ENCODE measurements at regions of chr9 and their contacts with region 1.

Region 1: DNA sequence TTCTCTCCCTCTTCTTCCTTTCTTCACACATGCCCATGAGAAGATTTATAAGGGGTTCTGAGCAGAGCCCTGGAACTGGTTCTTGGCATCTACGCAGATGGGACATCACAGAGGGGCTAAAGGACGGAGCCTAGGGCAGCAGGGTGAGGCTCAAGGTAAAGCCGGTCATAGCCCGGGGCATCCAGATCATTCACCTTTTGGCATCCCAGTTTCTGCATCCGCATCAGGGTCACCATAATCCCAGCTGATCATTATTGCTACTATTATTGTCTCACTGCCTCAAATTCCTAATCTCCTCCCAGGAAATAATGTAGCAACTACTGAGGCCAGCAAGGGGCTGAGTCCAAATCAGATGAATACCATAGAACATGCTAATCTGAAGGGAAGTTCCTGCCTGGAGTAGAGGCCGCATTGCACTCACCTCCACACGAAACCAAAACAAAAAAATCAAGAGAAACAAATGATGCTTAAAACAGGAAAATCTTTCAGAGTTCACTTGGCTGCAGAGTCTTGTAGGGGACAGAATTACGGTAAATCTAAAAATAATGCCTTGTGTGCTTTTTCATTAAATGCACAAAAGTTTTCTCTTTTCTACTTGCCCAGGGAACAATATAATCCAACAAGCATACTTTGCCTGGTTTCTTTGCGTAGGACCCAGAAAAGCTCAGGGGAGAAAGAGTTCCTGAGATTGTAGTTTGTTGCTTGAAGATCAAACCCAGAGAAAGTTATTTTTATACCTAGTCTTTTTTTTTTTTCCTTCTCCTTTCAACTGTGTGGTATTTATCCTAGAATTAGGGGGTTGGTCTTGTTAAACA is 87.6 kb upstream of the KLF4 start:
- DNase-seq: no peak
- ATAC-seq: peak; percentile 16 to 38

Region 2: GRCh38 chr9:107513464-107514100 is 63.6 kb before region 1 on chr9:
- intact Hi-C with region 1: loop called in 1 of 2 experiments (anchors 10 kb)
- DNase-seq: no peak
- ATAC-seq: peak in 1 of 2 donors; percentile 43

Region 3: GRCh38 chr9:107650321-107650720 is 73.2 kb after region 1 on chr9:
- intact Hi-C with region 1: no loop called
- DNase-seq: no peak
- ATAC-seq: no peak

Measured in left cardiac atrium (tissue), 4 donors.